CD14-positive monocyte (primary cell): ENCODE measurements at regions of chr6 and their contacts with region 1.

Region 1: GRCh38 chr6:11575408-11576033 is 38.0 kb downstream of the TMEM170B start:
- DNase-seq: peak; percentile 71 to 86 (median 83)
- H3K4me3 ChIP-seq: peak overlapping the region; percentile 36 to 71 (median 61)
- H3K4me3 Mint-ChIP-seq: peak overlapping the region; percentile 75 to 88
- H3K27ac ChIP-seq: peak overlapping the region; percentile 42 to 71
- H3K27ac Mint-ChIP-seq: peak overlapping the region; percentile 79 to 93 (median 89)
- H3K4me1 ChIP-seq: peaks cover 19 to 28% of the 10 kb centered on the region in 2 donors
- H3K4me1 Mint-ChIP-seq: peaks cover 42% of the 10 kb centered on the region
- H3K27me3 ChIP-seq: no peaks in the 10 kb centered on the region
- H3K27me3 Mint-ChIP-seq: no peaks in the 10 kb centered on the region
- CTCF ChIP-seq: peak; percentile 98

Region 2: DNA sequence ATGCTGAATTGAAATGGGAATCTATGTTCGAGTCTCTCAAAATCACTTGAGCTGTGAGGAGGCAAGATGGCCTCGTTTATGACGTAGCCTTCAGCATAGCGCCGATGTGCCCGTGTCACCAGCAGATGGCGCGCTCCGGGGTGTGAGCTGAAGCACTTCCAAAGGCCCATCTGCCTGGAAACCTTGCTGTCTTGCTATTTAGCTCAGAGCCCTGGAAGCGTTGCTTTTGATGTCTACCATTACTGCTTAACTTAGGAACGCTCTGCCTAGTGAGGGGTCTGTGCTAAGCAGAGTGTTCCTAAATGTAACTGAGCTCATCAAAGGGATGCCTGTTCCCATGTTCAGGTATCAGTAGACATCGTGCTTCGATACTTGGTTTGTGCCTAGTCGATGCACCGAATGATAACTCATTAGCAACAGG is 620.9 kb before region 1 on chr6:
- intact Hi-C with region 1: loop called in 1 of 2 experiments (anchors 10 kb)
- DNase-seq: peak; percentile 36 to 55 (median 49)
- H3K4me3 ChIP-seq: no peak overlapping the region
- H3K4me3 Mint-ChIP-seq: no peak overlapping the region
- H3K27ac ChIP-seq: no peak overlapping the region
- H3K27ac Mint-ChIP-seq: no peak overlapping the region
- H3K4me1 ChIP-seq: no peaks in the 10 kb centered on the region
- H3K4me1 Mint-ChIP-seq: no peaks in the 10 kb centered on the region
- H3K27me3 ChIP-seq: no peaks in the 10 kb centered on the region
- H3K27me3 Mint-ChIP-seq: peaks cover 0 to 4% (median 0%) of the 10 kb centered on the region in 3 donors
- CTCF ChIP-seq: peak; percentile 85

Region 3: GRCh38 chr6:11232193-11232769 is 343.2 kb before region 1 on chr6 and contains the start of gene NEDD9:
- intact Hi-C with region 1: loop called in 1 of 2 experiments (anchors 10 kb)
- DNase-seq: peak; percentile 89 to 96 (median 92)
- H3K4me3 ChIP-seq: peak within 1 kb of the TSS; percentile 52 to 98 (median 88)
- H3K4me3 Mint-ChIP-seq: peak within 1 kb of the TSS; percentile 94 to 99
- H3K27ac ChIP-seq: peak within 1 kb of the TSS; percentile 45 to 80
- H3K27ac Mint-ChIP-seq: peak within 1 kb of the TSS; percentile 96 to 100 (median 97)
- H3K4me1 ChIP-seq: peaks cover 27 to 40% of the 10 kb centered on the region in 2 donors
- H3K4me1 Mint-ChIP-seq: peaks cover 50% of the 10 kb centered on the region
- H3K27me3 ChIP-seq: peaks cover 0 to 3% of the 10 kb centered on the region in 2 donors
- H3K27me3 Mint-ChIP-seq: peaks cover 0 to 6% (median 4%) of the 10 kb centered on the region in 3 donors
- CTCF ChIP-seq: no peak
- polyA plus RNA-seq, gene NEDD9: 18.2 to 35.9 (median 33.0) TPM

Region 4: DNA sequence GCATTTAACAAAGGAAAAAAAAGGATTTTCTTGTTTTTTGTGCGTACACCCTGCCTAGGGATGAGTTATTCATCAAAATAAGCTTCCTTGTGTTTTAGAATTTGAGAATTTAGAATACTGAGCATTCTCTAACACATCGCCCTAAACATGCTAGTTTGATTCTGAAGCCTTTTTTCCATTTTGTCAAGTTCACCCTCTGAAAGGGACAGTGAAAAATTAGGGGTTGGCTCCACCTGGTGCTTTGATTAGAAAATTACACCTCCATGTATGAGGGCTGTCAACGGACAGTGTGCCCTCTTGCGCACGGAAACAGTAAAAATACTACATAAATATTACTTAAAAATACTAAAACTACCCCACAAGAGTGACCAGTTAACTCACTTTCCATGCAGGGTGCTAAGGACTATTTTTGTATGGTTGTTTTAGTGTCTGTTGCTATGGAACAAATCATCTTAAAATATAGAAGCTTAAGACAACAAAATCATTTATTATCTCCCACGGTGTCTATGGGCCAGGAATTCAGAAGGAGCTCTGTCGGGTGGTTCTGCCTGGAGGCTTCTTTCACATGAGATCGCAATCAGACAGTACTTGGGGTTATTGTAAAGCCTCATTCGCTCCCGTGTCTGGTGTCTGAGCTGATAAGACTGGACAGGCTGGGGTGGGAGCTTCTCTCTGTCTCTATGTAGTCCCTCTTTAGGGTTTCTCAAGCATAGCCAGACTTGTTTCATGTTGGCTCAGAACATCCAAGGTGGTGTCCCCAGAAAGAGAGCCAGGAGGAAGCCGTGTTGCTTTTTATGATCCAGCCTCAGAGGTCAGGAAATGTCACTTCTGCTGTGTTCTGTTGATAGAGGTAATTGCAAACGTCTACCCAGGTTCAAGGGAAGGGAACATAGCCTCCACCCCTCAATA is 79.1 kb before region 1 on chr6:
- intact Hi-C with region 1: loop called in 1 of 2 experiments (anchors 2 kb)
- DNase-seq: peak; percentile 72 to 82 (median 80)
- H3K4me3 ChIP-seq: peak overlapping the region; percentile 19 to 65 (median 47)
- H3K4me3 Mint-ChIP-seq: peak overlapping the region; percentile 68 to 83
- H3K27ac ChIP-seq: peak overlapping the region; percentile 89 to 95
- H3K27ac Mint-ChIP-seq: peak overlapping the region; percentile 95 to 100 (median 99)
- H3K4me1 ChIP-seq: peaks cover 35 to 42% of the 10 kb centered on the region in 2 donors
- H3K4me1 Mint-ChIP-seq: peaks cover 29% of the 10 kb centered on the region
- H3K27me3 ChIP-seq: no peaks in the 10 kb centered on the region
- H3K27me3 Mint-ChIP-seq: peaks cover 0 to 3% (median 0%) of the 10 kb centered on the region in 3 donors
- CTCF ChIP-seq: peak; percentile 93

Region 5: GRCh38 chr6:11525468-11526155 is 49.9 kb before region 1 on chr6:
- intact Hi-C with region 1: no loop called
- DNase-seq: peak; percentile 95 to 99 (median 98)
- H3K4me3 ChIP-seq: peak overlapping the region in 1 of 3 experiments; percentile 32
- H3K4me3 Mint-ChIP-seq: peak overlapping the region in 1 of 2 donors; percentile 11
- H3K27ac ChIP-seq: peak overlapping the region; percentile 73 to 98
- H3K27ac Mint-ChIP-seq: peak overlapping the region in 4 of 7 donors; percentile 93 to 95 (median 94)
- H3K4me1 ChIP-seq: peaks cover 70 to 83% of the 10 kb centered on the region in 2 donors
- H3K4me1 Mint-ChIP-seq: peaks cover 44% of the 10 kb centered on the region
- H3K27me3 ChIP-seq: no peaks in the 10 kb centered on the region
- H3K27me3 Mint-ChIP-seq: peaks cover 0 to 1% (median 0%) of the 10 kb centered on the region in 3 donors
- CTCF ChIP-seq: no peak

Region 6: GRCh38 chr6:11537229-11538051 is 38.1 kb before region 1 on chr6 and contains the start of gene TMEM170B:
- intact Hi-C with region 1: loop called in 1 of 2 experiments (anchors 5 kb)
- DNase-seq: peak; percentile 94 to 97 (median 96)
- H3K4me3 ChIP-seq: peak within 1 kb of the TSS; percentile 94 to 100 (median 95)
- H3K4me3 Mint-ChIP-seq: peak within 1 kb of the TSS; percentile 88 to 97
- H3K27ac ChIP-seq: peak within 1 kb of the TSS; percentile 91 to 93
- H3K27ac Mint-ChIP-seq: peak within 1 kb of the TSS; percentile 95 to 99 (median 97)
- H3K4me1 ChIP-seq: peaks cover 41 to 50% of the 10 kb centered on the region in 2 donors
- H3K4me1 Mint-ChIP-seq: peaks cover 46% of the 10 kb centered on the region
- H3K27me3 ChIP-seq: no peaks in the 10 kb centered on the region
- H3K27me3 Mint-ChIP-seq: peaks cover 0 to 2% (median 0%) of the 10 kb centered on the region in 3 donors
- CTCF ChIP-seq: no peak
- polyA plus RNA-seq, gene TMEM170B: 11.7 to 33.4 (median 19.7) TPM

Region 7: GRCh38 chr6:11618533-11618932 is 43.0 kb after region 1 on chr6:
- intact Hi-C with region 1: no loop called
- DNase-seq: no peak
- H3K4me3 ChIP-seq: no peak overlapping the region
- H3K4me3 Mint-ChIP-seq: no peak overlapping the region
- H3K27ac ChIP-seq: no peak overlapping the region
- H3K27ac Mint-ChIP-seq: peak overlapping the region in 1 of 7 donors; percentile 2
- H3K4me1 ChIP-seq: no peaks in the 10 kb centered on the region
- H3K4me1 Mint-ChIP-seq: no peaks in the 10 kb centered on the region
- H3K27me3 ChIP-seq: no peaks in the 10 kb centered on the region
- H3K27me3 Mint-ChIP-seq: no peaks in the 10 kb centered on the region
- CTCF ChIP-seq: no peak